ENCODE measurements at regions of chr5 and their contacts with region 1.

Region 1: GRCh38 chr5:141512390-141512910 is 23.6 kb downstream of the PCDHGC5 start:
- DNase-seq: peak; percentile 91
- H3K4me3 Mint-ChIP-seq: peak overlapping the region; percentile 71
- H3K27ac Mint-ChIP-seq: no peak overlapping the region
- H3K4me1 Mint-ChIP-seq: peaks cover 30% of the 10 kb centered on the region
- H3K27me3 Mint-ChIP-seq: no peaks in the 10 kb centered on the region

Region 2: DNA sequence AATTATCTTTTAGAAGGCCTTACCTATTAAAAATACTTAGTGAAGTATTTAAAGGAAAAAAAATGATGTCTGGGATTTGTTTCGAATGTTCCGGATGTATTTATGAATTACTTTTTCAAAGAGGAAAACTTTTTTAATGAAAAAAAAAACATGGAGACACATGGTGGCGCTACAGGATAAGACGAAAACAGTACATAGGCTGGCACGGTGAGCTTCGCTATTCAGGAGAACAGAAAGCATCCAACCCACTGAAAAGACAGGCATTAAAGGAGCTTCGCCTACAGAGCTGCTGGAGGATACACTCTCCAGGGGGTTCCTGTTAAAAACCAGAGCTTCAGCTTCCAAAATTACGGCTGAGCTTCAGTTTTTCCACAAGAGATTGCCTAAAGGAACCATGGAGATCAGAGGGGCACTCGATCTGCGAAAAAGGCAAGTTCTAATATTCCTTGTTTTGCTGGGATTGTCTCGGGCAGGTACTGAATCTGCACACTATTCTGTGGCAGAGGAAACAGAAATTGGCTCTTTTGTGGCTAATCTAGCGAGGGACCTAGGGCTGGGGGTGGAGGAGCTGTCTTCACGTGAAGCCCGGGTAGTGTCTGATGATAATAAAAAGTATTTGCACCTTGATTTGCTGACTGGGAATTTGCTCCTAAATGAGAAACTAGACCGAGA is 289.2 kb before region 1 on chr5 and contains the start of gene PCDHB14:
- CTCF ChIA-PET with region 1: no interaction called
- POLR2A ChIA-PET with region 1: no interaction called
- intact Hi-C with region 1: loop called (anchors 5 kb)
- DNase-seq: no peak
- H3K4me3 Mint-ChIP-seq: no peak within 1 kb of the TSS
- H3K27ac Mint-ChIP-seq: no peak within 1 kb of the TSS
- H3K4me1 Mint-ChIP-seq: peaks cover 5% of the 10 kb centered on the region
- H3K27me3 Mint-ChIP-seq: peaks cover 46% of the 10 kb centered on the region
- total RNA-seq, gene PCDHB14: not detected

Region 3: DNA sequence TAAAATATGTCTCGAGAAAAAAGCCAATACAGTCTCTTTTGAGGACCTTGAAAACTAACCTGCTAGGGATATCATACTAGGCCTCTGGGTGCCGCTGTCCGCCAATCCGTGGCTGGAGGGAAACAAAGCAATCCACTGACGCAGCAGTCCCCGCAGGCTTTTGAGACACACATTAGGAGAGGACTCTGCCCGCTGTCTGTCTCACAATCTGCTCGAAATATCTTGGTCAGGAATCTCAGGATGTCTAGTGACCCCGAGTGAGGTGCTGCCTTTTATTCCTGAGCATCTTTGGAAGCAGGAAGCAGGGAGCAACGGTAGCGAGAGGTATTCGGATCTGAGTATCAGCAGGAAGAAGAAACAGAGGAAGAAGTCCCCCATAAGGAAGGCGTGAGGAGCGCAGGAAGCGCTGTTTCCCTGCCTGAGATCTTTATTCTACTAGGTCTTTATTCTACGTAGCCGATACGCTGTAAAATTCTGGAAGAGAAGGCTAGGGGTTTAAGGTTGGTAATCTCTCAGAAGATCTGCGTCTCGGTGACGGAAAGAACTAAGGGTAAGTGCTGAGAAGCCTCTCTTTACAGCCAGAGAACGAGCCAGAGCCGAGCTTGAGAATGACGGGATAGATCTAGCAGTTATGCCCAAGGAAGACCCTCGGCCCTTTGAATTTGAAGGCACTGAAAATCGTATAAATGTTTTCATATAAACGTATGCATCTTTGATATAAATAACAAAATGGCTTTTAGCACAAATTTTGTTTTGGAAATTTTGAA is 186.2 kb before region 1 on chr5:
- CTCF ChIA-PET with region 1: interaction called, 4 read pairs
- POLR2A ChIA-PET with region 1: no interaction called
- intact Hi-C with region 1: loop called (anchors 1 kb)
- DNase-seq: peak; percentile 82
- H3K4me3 Mint-ChIP-seq: peak overlapping the region; percentile 82
- H3K27ac Mint-ChIP-seq: peak overlapping the region; percentile 28
- H3K4me1 Mint-ChIP-seq: peaks cover 9% of the 10 kb centered on the region
- H3K27me3 Mint-ChIP-seq: peaks cover 25% of the 10 kb centered on the region

Region 4: DNA sequence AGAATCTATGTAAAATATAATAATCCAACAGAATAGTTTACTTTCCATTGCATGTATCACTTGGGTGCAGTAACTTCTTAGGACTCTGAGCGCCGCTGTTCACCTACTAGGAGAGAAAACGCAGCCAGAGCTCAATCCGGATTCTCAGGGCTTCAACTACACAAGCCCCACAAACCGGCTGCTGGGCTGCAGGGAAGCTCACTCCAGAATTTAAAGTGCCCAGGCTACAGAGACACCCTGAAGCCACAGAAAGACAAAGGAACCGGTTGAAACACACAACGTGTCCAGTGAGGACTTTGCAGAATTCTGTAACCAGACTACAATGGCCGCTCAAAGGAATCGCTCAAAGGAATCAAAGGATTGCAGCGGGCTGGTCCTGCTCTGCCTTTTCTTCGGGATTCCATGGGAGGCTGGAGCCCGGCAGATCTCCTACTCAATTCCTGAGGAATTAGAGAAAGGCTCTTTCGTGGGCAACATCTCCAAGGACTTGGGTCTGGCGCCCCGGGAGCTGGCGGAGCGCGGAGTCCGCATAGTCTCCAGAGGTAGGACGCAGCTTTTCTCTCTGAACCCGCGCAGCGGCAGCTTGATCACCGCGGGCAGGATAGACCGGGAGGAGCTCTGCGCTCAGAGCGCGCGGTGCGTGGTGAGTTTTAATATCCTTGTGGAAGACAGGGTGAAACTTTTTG is 99.5 kb before region 1 on chr5 and contains the start of gene PCDHGA10:
- CTCF ChIA-PET with region 1: interaction called, 59 read pairs
- POLR2A ChIA-PET with region 1: no interaction called
- intact Hi-C with region 1: loop called (anchors 5 kb)
- DNase-seq: peak; percentile 69
- H3K4me3 Mint-ChIP-seq: peak within 1 kb of the TSS; percentile 66
- H3K27ac Mint-ChIP-seq: no peak within 1 kb of the TSS
- H3K4me1 Mint-ChIP-seq: peaks cover 18% of the 10 kb centered on the region
- H3K27me3 Mint-ChIP-seq: peaks cover 61% of the 10 kb centered on the region
- total RNA-seq, gene PCDHGA10: 0.07 to 0.10 TPM

Region 5: GRCh38 chr5:141430332-141431113 is 81.9 kb before region 1 on chr5 and contains the start of gene PCDHGA12:
- CTCF ChIA-PET with region 1: interaction called, 10 read pairs
- POLR2A ChIA-PET with region 1: no interaction called
- intact Hi-C with region 1: no loop called
- DNase-seq: peak; percentile 43
- H3K4me3 Mint-ChIP-seq: peak within 1 kb of the TSS; percentile 49
- H3K27ac Mint-ChIP-seq: peak within 1 kb of the TSS; percentile 63
- H3K4me1 Mint-ChIP-seq: peaks cover 4% of the 10 kb centered on the region
- H3K27me3 Mint-ChIP-seq: peaks cover 56% of the 10 kb centered on the region
- total RNA-seq, gene PCDHGA12: 0.07 TPM in 1 of 2 experiments, not detected in the other

Region 6: DNA sequence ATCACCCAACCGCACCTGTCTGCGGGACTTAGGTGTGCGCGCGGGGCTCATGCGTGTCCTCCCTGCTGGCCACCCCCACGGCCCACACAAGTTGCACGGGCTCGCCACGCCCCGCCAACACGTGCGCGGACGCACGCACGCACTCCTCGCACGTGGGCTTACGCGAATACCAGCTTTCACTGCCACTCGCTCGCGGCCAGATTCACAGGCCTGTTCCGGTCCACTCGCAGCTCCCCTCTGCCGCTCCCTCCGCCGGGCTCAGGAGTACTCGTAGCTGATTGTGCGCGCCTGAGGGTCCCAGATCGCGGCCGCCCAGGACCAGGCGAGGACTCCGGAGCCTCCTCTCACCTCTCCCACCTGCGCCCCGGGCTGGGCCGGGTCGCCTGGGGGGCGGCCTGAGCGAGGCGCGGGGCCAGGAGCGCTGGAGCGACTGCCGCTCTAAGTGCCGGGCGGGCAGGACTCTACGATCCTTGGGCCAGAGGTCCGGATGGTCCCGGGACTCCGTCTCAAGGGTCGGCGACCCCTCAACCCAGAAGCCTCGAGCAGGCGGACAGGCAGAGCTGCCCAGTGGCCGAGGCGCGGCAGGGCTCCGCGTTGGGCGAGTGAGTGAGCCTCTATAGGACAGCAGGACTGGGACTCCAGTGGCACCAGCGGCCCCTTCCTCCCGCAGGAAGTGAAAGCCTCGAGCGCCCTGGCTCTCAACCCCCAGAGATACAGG is 20.1 kb before region 1 on chr5:
- CTCF ChIA-PET with region 1: interaction called, 16 read pairs
- POLR2A ChIA-PET with region 1: no interaction called
- intact Hi-C with region 1: no loop called
- DNase-seq: peak; percentile 30
- H3K4me3 Mint-ChIP-seq: peak overlapping the region; percentile 60
- H3K27ac Mint-ChIP-seq: no peak overlapping the region
- H3K4me1 Mint-ChIP-seq: peaks cover 12% of the 10 kb centered on the region
- H3K27me3 Mint-ChIP-seq: peaks cover 70% of the 10 kb centered on the region

Region 7: GRCh38 chr5:141557681-141558136 is 45.3 kb after region 1 on chr5:
- CTCF ChIA-PET with region 1: interaction called, 20 read pairs
- POLR2A ChIA-PET with region 1: no interaction called
- intact Hi-C with region 1: no loop called
- DNase-seq: peak; percentile 84
- H3K4me3 Mint-ChIP-seq: no peak overlapping the region
- H3K27ac Mint-ChIP-seq: peak overlapping the region; percentile 47
- H3K4me1 Mint-ChIP-seq: peaks cover 25% of the 10 kb centered on the region
- H3K27me3 Mint-ChIP-seq: no peaks in the 10 kb centered on the region

Measured in activated CD4-positive, alpha-beta memory T cell treated with anti-CD3 and anti-CD28 coated beads for 36 hours (primary cell).